ENCODE measurements at regions of chr9 and their contacts with region 1.

Region 1: DNA sequence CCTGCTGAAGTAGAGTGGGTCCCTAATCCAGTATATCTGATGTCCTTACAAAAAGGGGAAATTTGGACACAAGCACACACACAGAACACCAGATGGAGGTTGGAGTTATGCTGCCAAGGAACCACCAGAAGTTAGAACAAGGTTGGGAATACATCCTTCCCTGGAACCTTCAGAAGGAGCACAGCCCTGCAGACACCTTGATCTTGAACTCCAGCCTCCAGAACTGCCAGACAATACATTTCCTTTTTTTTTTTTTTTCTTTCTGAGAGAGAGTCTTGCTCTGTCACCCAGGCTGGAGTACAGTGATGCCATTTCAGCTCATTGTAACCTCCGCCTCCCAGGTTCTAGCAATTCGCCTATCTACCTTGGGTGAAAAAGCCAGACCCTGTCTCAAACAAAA is 7.1 kb upstream of the ODF2 start:
- DNase-seq: no peak
- H3K4me3 Mint-ChIP-seq: no peak overlapping the region
- H3K27ac Mint-ChIP-seq: no peak overlapping the region
- H3K4me1 Mint-ChIP-seq: no peaks in the 10 kb centered on the region
- H3K27me3 Mint-ChIP-seq: peaks cover 2% of the 10 kb centered on the region

Region 2: GRCh38 chr9:128438343-128439109 is 10.2 kb before region 1 on chr9:
- CTCF ChIA-PET with region 1: interaction called, 11 read pairs
- POLR2A ChIA-PET with region 1: no interaction called
- DNase-seq: peak; percentile 87
- H3K4me3 Mint-ChIP-seq: no peak overlapping the region
- H3K27ac Mint-ChIP-seq: no peak overlapping the region
- H3K4me1 Mint-ChIP-seq: peaks cover 9% of the 10 kb centered on the region
- H3K27me3 Mint-ChIP-seq: no peaks in the 10 kb centered on the region

Region 3: DNA sequence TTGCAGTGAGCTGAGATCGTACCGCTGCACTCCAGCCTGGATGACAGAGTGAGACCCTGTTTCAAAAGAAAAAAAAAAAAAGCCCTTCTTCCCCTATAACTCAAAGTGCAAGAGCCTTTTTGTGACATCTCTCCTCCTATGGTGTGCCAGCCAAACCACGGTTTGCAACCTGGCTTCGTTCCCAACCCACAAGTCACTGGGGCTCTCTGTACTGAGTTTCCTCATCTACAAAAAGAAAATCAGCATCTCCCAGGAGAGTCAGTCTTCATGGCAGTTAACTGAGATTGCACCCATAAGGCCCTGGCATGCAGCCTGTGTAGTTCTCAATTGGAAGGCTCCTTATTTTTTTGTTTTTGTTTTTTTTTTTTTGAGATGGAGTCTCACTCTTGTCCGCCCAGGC is 21.8 kb after region 1 on chr9:
- CTCF ChIA-PET with region 1: no interaction called
- POLR2A ChIA-PET with region 1: no interaction called
- DNase-seq: no peak
- H3K4me3 Mint-ChIP-seq: no peak overlapping the region
- H3K27ac Mint-ChIP-seq: peak overlapping the region; percentile 57
- H3K4me1 Mint-ChIP-seq: peaks cover 2% of the 10 kb centered on the region
- H3K27me3 Mint-ChIP-seq: no peaks in the 10 kb centered on the region

Measured in activated CD4-positive, alpha-beta T cell treated with anti-CD3 and anti-CD28 coated beads, Interleukin-2, amount 10 ng/mL, durations not matched to agents 7 days and 5 days (primary cell).